ENCODE measurements at regions of chr9 and their contacts with region 1.

Region 1: DNA sequence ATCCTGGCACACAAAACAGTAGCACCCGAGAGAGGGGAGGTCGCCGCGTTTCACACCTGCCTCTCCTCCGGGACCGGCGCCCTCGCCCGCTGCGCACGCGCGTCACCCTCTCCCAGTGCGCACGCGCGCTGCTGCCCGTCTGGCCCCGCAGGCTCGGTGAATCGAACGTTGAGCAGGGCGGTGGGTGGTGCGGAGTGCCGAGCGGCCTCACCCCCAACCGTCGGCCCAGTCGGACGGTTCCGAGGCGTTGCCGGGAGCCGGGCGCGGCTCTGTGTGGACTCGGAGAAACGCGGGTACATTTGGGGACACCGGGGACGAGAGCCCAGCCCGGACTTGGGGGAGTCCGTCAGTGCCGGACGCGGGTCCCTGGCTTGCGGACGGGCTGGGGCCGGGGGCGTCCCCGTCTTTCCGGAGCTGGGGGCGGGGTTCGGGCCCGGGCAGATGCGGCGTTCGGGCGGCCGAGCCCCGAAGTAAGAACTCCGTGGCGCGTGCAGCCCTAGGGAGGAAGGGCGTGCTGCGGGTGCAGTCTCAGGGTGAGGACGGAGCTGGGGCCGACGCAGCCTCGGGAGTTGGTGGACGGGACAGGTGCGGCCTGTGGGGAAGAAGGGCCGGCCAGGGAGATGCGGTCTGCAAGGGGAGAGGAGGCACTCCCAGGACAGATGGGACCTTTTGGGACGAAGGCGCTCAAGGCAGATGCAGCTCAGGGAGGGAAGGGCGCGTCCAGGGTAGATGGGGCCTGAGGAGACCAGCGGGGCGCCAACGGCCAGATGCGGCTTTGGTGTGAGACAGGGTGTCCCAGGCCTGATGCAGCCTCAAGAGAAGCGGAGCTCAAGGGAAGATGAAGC is at the start of gene POMT1:
- DNase-seq: peak; percentile 94
- ATAC-seq: peak; percentile 42
- H3K4me3 Mint-ChIP-seq: peak within 1 kb of the TSS; percentile 83
- H3K27ac Mint-ChIP-seq: peak within 1 kb of the TSS; percentile 84
- H3K4me1 Mint-ChIP-seq: peaks cover 53% of the 10 kb centered on the region
- H3K27me3 Mint-ChIP-seq: no peaks in the 10 kb centered on the region
- total RNA-seq, gene POMT1: 28.2 to 30.7 TPM

Region 2: GRCh38 chr9:131270171-131271015 is 232.6 kb before region 1 on chr9:
- CTCF ChIA-PET with region 1: no interaction called
- POLR2A ChIA-PET with region 1: no interaction called
- intact Hi-C with region 1: loop called (anchors 5 kb)
- DNase-seq: peak; percentile 77
- ATAC-seq: peak; percentile 13
- H3K4me3 Mint-ChIP-seq: peak overlapping the region; percentile 90
- H3K27ac Mint-ChIP-seq: peak overlapping the region; percentile 100
- H3K4me1 Mint-ChIP-seq: peaks cover 58% of the 10 kb centered on the region
- H3K27me3 Mint-ChIP-seq: no peaks in the 10 kb centered on the region

Region 3: DNA sequence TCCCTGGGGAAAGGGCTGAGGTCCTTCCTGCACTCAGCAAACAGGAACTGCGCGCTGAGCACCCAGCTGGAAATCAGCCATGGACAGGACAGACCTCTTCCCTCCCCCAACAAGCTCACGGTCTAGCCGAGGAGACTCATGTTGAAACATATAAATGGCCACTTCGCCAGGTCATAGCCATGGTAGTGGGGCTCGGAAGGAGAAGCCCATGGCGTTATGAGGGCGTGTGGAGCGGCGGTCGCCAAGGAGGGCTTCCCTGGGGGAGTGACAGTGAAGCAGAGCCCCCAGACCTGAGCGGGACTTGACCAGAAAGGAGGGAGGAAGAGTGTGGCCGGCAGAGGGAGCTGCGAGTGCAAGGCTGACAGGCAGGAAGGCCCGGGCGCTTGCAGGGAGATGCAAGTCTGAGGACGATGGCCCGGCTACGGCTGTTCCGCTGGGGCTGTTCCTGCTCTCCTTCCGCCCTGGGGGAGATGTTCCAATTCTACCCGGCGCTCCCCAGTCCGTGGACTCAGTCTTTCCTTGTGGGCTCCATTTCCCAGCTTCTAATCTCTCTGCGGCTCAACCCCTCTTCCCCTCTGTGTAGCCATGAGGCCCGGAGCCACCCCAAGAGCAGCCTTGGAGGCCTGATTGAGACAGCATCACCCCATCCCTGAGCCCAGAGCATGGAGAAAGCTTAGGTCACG is 153.0 kb before region 1 on chr9:
- CTCF ChIA-PET with region 1: interaction called, 5 read pairs
- POLR2A ChIA-PET with region 1: no interaction called
- intact Hi-C with region 1: loop called in 1 of 2 experiments (anchors 1 kb)
- DNase-seq: peak; percentile 96
- ATAC-seq: peak; percentile 98
- H3K4me3 Mint-ChIP-seq: peak overlapping the region; percentile 16
- H3K27ac Mint-ChIP-seq: peak overlapping the region; percentile 65
- H3K4me1 Mint-ChIP-seq: peaks cover 9% of the 10 kb centered on the region
- H3K27me3 Mint-ChIP-seq: no peaks in the 10 kb centered on the region

Region 4: GRCh38 chr9:131366761-131367401 is 136.1 kb before region 1 on chr9:
- CTCF ChIA-PET with region 1: no interaction called
- POLR2A ChIA-PET with region 1: interaction called, 6 read pairs
- intact Hi-C with region 1: loop called in 1 of 2 experiments (anchors 5 kb)
- DNase-seq: no peak
- ATAC-seq: no peak
- H3K4me3 Mint-ChIP-seq: no peak overlapping the region
- H3K27ac Mint-ChIP-seq: no peak overlapping the region
- H3K4me1 Mint-ChIP-seq: peaks cover under 1% of the 10 kb centered on the region
- H3K27me3 Mint-ChIP-seq: no peaks in the 10 kb centered on the region

Region 5: DNA sequence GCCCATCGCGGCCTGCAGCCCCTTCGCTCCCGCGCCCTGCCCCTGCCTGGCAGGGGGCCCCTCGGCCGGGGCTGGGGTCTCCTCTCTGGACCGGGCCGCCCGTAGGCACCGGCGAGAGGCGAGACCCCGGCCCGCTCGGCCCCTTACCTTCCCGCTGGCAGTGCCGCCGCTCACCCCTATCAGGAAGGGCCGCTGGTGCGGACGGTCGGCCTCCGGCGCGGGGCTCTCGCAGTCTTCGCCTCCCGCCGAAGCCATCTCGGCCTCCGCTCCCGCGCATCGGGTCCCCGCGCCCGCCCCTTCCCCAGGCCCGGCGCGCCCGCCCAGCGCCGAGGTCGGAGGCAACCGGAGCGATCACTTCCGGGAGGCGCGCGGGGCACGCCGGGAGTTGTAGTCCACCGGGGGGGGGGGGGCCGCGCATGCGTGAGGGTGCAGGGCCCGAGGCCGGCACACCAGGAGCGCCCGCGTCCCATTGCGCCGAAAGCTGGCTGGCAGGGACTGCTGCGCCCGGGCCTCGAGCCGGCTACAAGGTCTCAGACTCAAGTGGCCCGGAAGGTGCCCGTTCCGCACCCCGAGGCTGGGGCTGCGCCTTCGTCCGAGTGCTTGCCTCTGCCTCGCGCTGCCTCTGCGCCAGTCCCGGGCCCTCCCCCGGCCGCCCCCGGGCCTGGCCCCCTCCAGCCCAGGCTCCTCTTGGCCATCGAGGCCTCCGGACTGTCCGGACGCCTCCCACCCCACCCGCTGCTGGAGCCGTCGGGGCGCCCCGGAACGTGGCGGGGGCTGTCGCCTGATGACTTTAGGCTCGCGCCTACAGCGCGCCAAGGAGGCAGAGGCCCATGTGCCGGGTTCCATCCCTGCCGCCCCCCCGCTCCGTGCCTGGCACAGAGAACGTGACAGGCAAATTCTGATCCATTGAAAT is 28.2 kb after region 1 on chr9 and contains the start of gene UCK1:
- CTCF ChIA-PET with region 1: no interaction called
- POLR2A ChIA-PET with region 1: no interaction called
- intact Hi-C with region 1: loop called in 1 of 2 experiments (anchors 1 kb)
- DNase-seq: peak; percentile 89
- ATAC-seq: peak; percentile 95
- H3K4me3 Mint-ChIP-seq: peak within 1 kb of the TSS; percentile 78
- H3K27ac Mint-ChIP-seq: peak within 1 kb of the TSS; percentile 69
- H3K4me1 Mint-ChIP-seq: peaks cover 29% of the 10 kb centered on the region
- H3K27me3 Mint-ChIP-seq: no peaks in the 10 kb centered on the region
- total RNA-seq, gene UCK1: 15.2 to 16.5 TPM

Region 6: GRCh38 chr9:131590908-131591844 is 88.2 kb after region 1 on chr9:
- CTCF ChIA-PET with region 1: no interaction called
- POLR2A ChIA-PET with region 1: no interaction called
- intact Hi-C with region 1: no loop called
- DNase-seq: peak; percentile 90
- ATAC-seq: peak; percentile 94
- H3K4me3 Mint-ChIP-seq: no peak overlapping the region
- H3K27ac Mint-ChIP-seq: peak overlapping the region; percentile 85
- H3K4me1 Mint-ChIP-seq: peaks cover 28% of the 10 kb centered on the region
- H3K27me3 Mint-ChIP-seq: no peaks in the 10 kb centered on the region

Region 7: DNA sequence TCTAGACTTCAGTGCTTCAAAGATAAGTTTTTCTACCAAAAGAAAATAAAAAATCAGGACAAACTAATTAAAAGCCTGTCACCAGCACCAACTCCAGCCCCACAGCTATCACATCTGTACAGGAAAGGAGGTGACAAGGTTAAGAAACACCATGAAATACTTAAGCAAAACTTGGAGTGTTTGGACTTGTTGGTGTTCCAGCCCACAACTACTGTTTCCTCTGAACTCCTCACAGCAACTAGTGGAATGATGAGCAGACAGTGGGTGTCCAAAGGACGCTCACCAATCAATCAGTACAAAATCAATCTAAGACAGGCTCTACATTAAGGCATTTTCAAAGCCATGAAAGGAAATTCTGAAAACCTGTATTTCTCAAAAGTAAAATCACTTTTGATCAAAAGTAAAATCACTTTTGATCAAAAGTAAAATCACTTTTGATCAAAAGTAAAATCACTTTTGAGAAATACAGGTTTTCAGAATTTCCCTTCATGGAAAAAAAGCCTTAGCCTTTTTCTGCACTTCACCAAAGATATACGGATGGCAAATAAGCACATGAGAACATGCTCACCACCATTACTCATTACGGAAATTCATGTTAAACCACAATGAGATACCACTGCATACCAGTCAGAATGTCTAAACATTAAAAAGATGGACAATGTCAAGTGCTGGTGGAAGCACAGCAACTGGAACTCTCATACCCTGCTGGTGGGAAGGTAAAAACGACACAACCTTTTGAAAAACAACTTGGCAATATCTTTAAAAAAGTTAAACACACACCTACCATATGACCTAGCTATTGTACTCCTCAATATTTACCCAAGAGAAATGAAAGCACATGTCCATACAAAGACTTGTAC is 496.9 kb after region 1 on chr9:
- CTCF ChIA-PET with region 1: no interaction called
- POLR2A ChIA-PET with region 1: no interaction called
- intact Hi-C with region 1: loop called in 1 of 2 experiments (anchors 2 kb)
- DNase-seq: no peak
- ATAC-seq: peak; percentile 85
- H3K4me3 Mint-ChIP-seq: no peak overlapping the region
- H3K27ac Mint-ChIP-seq: no peak overlapping the region
- H3K4me1 Mint-ChIP-seq: peaks cover 20% of the 10 kb centered on the region
- H3K27me3 Mint-ChIP-seq: no peaks in the 10 kb centered on the region

Measured in activated CD4-positive, alpha-beta T cell treated with anti-CD3 and anti-CD28 coated beads for 36 hours (primary cell).